ENCODE measurements at regions of chr22 and their contacts with region 1.

Region 1: GRCh38 chr22:20946080-20946986 is 20.7 kb upstream of the AIFM3 start:
- DNase-seq: no peak
- ATAC-seq: peak; percentile 75 to 84 (median 83)
- H3K4me3 ChIP-seq: no peak overlapping the region
- H3K27ac ChIP-seq: peak overlapping the region; percentile 71
- H3K4me1 ChIP-seq: peaks cover 31% of the 10 kb centered on the region
- H3K27me3 ChIP-seq: no peaks in the 10 kb centered on the region
- CTCF ChIP-seq: no peak

Region 2: GRCh38 chr22:20867179-20868024 is 78.9 kb before region 1 on chr22:
- intact Hi-C with region 1: loop called in 1 of 2 experiments (anchors 10 kb)
- DNase-seq: peak in 1 of 2 donors; percentile 56
- ATAC-seq: peak in 3 of 4 donors; percentile 26 to 55 (median 44)
- H3K4me3 ChIP-seq: peak overlapping the region; percentile 11
- H3K27ac ChIP-seq: peak overlapping the region; percentile 67
- H3K4me1 ChIP-seq: peaks cover 6% of the 10 kb centered on the region
- H3K27me3 ChIP-seq: no peaks in the 10 kb centered on the region
- CTCF ChIP-seq: no peak

Region 3: GRCh38 chr22:20989323-20990138 is 43.2 kb after region 1 on chr22:
- intact Hi-C with region 1: no loop called
- DNase-seq: no peak
- ATAC-seq: no peak
- H3K4me3 ChIP-seq: no peak overlapping the region
- H3K27ac ChIP-seq: no peak overlapping the region
- H3K4me1 ChIP-seq: no peaks in the 10 kb centered on the region
- H3K27me3 ChIP-seq: no peaks in the 10 kb centered on the region
- CTCF ChIP-seq: no peak

Region 4: GRCh38 chr22:21014202-21014725 is 67.9 kb after region 1 on chr22:
- intact Hi-C with region 1: no loop called
- DNase-seq: peak; percentile 90 to 93
- ATAC-seq: peak; percentile 71 to 89 (median 80)
- H3K4me3 ChIP-seq: peak overlapping the region; percentile 75
- H3K27ac ChIP-seq: peak overlapping the region; percentile 85
- H3K4me1 ChIP-seq: peaks cover 12% of the 10 kb centered on the region
- H3K27me3 ChIP-seq: no peaks in the 10 kb centered on the region
- CTCF ChIP-seq: no peak